ENCODE measurements at regions of chr1 and their contacts with region 1.

Region 1: GRCh38 chr1:111161843-111162487 is 21.9 kb downstream of the CEPT1 start:
- DNase-seq: no peak
- ATAC-seq: no peak
- H3K4me3 ChIP-seq: no peak overlapping the region
- H3K27ac ChIP-seq: no peak overlapping the region
- H3K4me1 ChIP-seq: no peaks in the 10 kb centered on the region
- H3K27me3 ChIP-seq: no peaks in the 10 kb centered on the region
- CTCF ChIP-seq: no peak
- POLR2A ChIP-seq: no peak
- RAD21 ChIP-seq: no peak

Region 2: DNA sequence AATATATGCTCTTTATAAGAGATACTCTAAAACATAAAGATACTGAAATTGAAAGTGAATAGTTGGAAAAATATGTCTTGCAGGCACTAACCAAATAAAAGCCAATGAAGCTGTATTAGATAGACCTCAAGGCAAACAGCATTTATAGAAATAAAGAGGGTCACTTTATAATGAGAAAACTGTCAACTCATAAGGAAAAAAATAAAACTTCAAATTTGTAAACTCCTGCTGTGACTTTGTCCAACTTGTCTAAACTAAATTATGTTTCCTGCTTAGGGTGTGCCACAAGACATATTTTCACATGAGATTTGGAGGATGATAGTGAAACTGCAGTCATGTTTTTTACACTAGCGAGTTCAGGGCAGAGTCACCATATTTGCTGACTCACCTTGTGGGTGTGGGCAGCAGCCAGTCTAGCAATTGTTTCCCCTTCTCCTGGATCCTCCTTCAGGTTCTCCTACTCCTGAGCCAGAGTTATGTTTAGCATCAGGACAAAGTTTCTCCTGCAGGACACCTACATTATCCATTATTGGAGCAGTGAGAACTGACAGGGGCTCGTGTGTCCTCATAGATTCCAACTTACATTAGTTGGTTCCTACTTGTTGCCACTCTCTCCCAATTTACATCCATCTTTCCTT is 245.2 kb before region 1 on chr1:
- CTCF ChIA-PET with region 1: no interaction called
- POLR2A ChIA-PET with region 1: no interaction called
- RAD21 ChIA-PET with region 1: no interaction called
- intact Hi-C with region 1: no loop called
- DNase-seq: peak; percentile 22
- ATAC-seq: peak; percentile 93
- H3K4me3 ChIP-seq: peak overlapping the region; percentile 12 to 46
- H3K27ac ChIP-seq: peak overlapping the region; percentile 7; the same call in 1 of the 2 replicates
- H3K4me1 ChIP-seq: peaks cover 3 to 12% of the 10 kb centered on the region in 2 experiments
- H3K27me3 ChIP-seq: no peaks in the 10 kb centered on the region
- CTCF ChIP-seq: no peak
- POLR2A ChIP-seq: no peak
- RAD21 ChIP-seq: no peak

Region 3: DNA sequence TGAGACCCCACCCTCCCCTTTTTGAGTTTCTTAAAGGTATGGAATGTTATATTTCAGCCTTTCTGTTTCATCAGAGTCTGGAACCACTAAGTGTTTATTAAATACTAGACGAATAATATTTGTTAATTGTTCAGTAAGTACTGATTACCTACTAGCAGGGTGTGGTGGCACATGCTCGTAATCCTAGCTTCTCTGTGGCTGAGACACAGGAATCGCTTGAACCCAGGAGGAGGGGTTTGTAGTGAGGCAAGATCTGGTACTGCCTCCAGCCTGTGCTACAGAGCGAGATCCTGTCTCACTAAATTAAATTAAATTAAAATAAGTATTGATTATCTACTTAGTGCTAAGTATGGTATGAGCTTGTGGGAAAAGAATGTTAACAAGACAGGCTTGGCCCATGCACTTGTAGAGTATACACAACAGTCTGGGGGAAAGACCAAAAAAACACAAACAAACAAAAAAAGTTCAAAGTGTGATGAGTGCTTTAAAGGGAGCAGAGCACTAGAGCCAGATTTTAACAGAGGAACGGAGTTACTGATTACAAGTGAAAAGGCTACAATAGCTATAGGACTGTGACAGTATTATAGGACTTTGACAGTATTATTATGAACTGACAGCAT is 19.5 kb before region 1 on chr1:
- CTCF ChIA-PET with region 1: no interaction called
- POLR2A ChIA-PET with region 1: no interaction called
- RAD21 ChIA-PET with region 1: no interaction called
- intact Hi-C with region 1: loop called (anchors 2 kb)
- DNase-seq: no peak
- ATAC-seq: no peak
- H3K4me3 ChIP-seq: no peak overlapping the region
- H3K27ac ChIP-seq: no peak overlapping the region
- H3K4me1 ChIP-seq: peaks cover 5 to 11% of the 10 kb centered on the region in 2 experiments; a peak in 3 of 4 replicates
- H3K27me3 ChIP-seq: no peaks in the 10 kb centered on the region
- CTCF ChIP-seq: no peak
- POLR2A ChIP-seq: no peak
- RAD21 ChIP-seq: no peak